AG04449 (cell line): ENCODE measurements at regions of chr1 and their contacts with region 1.

Region 1: DNA sequence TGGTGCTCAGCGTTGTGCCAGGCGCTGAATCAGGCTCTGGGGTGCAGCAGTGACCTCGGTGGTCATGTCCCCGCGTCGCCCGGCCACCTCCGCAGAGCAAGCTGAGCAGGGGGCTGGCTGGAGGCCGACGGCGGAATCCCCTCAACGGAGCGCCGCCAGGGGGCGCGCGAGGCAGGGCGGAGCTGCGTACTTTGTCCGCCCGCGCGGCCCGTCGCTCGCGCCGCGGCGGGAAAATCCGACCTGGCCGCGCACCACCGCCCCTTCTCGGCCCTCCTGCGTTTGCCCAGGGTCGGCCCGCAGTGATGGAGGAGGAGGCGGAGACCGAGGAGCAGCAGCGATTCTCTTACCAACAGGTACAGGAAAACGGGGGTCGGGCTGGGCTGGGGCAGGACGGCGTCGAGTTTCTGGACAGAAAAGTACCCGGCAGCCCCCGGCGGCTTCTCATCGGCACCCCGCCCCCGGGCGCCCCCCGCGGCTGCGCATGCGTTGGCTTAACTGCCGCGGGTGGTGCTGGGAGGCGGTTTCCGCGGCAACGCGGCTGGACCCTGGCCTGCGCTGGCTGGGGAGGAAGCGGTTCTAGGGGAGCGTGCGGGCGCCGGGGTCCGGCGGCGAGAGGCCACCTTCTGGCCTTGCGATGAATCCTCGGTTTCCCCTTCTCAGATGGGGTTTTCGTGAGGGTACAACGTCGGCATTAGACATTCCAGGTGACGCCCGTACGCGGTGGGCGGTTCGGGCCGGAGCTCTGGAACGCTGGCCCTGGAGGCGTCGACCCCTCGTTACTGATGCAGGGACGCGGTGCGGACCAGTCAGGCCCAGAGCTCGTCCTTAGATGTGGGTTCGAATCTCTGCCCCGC is at the start of gene CENPS:
- DNase-seq: no peak
- H3K4me3 ChIP-seq: peak within 1 kb of the TSS; percentile 90
- CTCF ChIP-seq: peak; percentile 91

Region 2: DNA sequence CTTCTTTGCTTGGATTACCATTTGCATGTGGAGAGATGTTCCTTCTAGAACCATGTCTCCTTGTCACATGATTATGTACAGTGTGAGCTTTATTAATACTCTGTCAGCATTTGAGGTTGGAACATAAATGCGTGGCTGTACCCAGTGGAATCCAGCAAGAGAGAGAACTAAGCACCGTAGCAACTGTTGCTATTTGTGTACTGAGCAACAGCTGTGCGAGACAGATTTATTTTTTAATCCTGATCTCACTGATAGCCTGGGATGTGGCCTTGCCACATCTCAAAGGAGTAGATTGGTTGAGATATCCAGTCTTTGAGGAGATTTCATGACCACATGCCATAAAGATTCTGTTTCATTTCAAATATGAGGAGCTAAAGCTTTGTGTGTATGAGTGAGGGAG is 176.7 kb before region 1 on chr1:
- CTCF ChIA-PET with region 1: no interaction called
- POLR2A ChIA-PET with region 1: no interaction called
- DNase-seq: peak; percentile 81
- H3K4me3 ChIP-seq: no peak overlapping the region
- CTCF ChIP-seq: no peak

Region 3: DNA sequence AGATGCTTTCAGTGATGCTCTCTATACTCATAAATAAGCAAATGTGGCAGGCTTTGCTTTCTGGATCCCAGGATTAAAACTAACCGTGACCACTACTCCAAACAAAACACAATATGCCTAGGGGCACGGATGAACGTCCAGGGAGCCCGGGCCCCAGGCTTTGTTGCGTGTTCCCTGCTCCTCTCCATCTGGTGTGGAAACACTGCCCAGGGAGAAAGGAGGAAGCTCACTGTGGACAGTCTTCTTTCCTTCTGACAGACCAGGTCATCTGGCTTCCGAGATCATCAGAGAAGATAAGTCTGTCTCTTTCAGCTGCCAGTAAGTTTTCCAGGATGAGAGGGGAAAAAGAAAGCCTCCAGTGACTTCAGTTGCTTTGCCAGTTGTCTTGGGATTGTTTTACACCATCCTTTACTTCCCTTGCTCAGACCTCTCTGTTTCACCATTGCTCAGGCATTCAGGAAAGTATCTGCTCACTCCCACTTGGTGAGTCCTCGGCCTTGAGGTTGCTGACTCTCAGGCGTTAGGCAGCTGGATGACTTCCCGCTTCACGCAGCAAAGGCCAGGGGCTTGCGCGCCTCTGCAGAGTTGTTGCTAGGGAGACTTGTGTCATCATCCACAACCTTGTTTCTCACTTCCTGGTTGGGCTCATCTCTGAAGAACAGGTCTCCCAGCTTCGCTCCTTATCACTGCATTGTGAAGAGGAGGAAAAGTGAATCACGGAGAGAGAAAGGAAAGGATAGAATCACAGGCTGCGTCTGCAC is 52.2 kb before region 1 on chr1:
- CTCF ChIA-PET with region 1: interaction called, 164 read pairs
- POLR2A ChIA-PET with region 1: interaction called, 6 read pairs
- DNase-seq: peak; percentile 63
- H3K4me3 ChIP-seq: no peak overlapping the region
- CTCF ChIP-seq: no peak

Region 4: GRCh38 chr1:10398734-10399623 is 31.5 kb before region 1 on chr1 and contains the start of gene PGD:
- CTCF ChIA-PET with region 1: interaction called, 18 read pairs
- POLR2A ChIA-PET with region 1: no interaction called
- DNase-seq: peak; percentile 85
- H3K4me3 ChIP-seq: peak within 1 kb of the TSS; percentile 90
- CTCF ChIP-seq: peak; percentile 2

Region 5: DNA sequence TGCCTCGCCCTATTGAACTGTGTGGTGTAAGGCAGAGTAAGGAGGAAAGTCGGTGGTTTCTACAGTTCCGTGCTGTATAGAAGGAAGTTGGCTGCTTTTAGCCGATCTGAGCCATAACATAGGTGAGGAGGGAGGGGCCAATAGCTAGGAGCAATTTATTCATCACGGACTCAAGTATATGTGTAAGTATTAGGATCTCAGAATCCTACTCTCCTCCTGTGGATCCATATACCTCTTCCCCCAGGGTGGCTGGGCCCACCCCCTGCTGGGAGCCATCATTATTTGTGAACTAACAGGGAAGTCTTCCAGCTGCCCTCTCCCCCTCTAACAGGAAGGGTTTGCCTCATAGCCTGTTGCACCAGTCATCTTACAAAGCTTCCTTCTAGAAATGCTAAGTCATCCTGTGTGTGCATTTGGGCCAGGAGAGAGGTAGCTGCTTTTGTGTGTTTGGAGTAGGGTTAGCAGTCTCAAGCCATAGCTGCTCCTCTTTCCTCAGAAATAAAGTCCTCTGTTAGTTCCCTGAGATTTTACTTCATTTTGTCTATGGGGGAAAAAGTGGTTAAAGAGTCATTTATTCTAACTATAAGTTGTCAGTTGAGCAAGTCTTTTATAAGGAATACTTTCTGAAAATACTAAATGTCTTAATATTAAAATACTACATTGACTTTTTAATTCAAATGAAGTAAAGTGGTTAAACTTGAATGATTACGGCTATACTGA is 15.1 kb before region 1 on chr1:
- CTCF ChIA-PET with region 1: interaction called, 42 read pairs
- POLR2A ChIA-PET with region 1: interaction called, 4 read pairs
- DNase-seq: peak; percentile 65
- H3K4me3 ChIP-seq: no peak overlapping the region
- CTCF ChIP-seq: no peak

Region 6: DNA sequence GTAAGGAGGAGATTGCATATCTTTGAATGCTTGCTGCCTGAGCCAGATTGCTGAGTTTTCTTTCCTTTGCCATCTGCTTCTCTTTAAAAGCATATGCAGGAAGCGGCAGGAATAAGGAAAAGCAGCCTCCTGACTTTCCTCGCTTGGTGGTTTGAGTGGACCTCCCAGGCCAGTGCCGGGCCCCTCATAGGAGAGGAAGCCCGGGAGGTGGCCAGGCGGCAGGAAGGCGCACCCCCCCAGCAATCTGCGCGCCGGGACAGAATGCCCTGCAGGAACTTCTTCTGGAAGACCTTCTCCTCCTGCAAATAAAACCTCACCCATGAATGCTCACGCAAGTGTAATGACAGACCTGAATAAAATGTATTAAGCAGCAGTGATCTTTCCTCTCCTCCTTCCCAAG is 20.8 kb after region 1 on chr1:
- CTCF ChIA-PET with region 1: interaction called, 39 read pairs
- POLR2A ChIA-PET with region 1: interaction called, 5 read pairs
- DNase-seq: no peak
- H3K4me3 ChIP-seq: peak overlapping the region; percentile 42
- CTCF ChIP-seq: no peak

Region 7: DNA sequence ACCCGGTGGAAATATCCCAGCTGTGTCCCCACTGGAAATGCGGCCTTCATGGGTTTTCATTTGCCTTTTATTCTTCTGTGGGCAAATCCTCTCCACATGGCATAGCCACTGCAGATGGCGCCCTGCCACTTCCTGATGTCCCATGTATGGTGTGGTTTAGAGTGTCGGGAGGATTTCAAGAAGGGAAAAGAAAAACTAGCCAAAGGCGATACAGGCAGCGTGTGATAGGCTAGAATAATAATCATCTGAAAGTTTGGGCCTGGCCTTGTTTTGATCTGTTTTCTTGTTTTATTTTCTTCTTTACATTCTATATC is 167.9 kb after region 1 on chr1:
- CTCF ChIA-PET with region 1: no interaction called
- POLR2A ChIA-PET with region 1: no interaction called
- DNase-seq: no peak
- H3K4me3 ChIP-seq: no peak overlapping the region
- CTCF ChIP-seq: no peak